B cell (primary cell): ENCODE measurements at regions of chr19 and their contacts with region 1.

Region 1: GRCh38 chr19:55407800-55408532 is 378 bp upstream of the UBE2S start:
- DNase-seq: peak; percentile 100
- ATAC-seq: peak; percentile 83
- H3K4me3 ChIP-seq: peak overlapping the region; percentile 55 to 89 (median 77)
- H3K4me3 Mint-ChIP-seq: peak overlapping the region; percentile 98
- H3K27ac ChIP-seq: peak overlapping the region; percentile 99 to 100
- H3K27ac Mint-ChIP-seq: peak overlapping the region; percentile 99
- H3K4me1 ChIP-seq: peaks cover 11 to 25% of the 10 kb centered on the region in 2 donors
- H3K4me1 Mint-ChIP-seq: peaks cover 32% of the 10 kb centered on the region
- H3K27me3 ChIP-seq: no peaks in the 10 kb centered on the region
- H3K27me3 Mint-ChIP-seq: no peaks in the 10 kb centered on the region
- CTCF ChIP-seq: no peak

Region 2: GRCh38 chr19:55279770-55280643 is 128.0 kb before region 1 on chr19 and contains the start of gene HSPBP1:
- CTCF ChIA-PET with region 1: no interaction called
- POLR2A ChIA-PET with region 1: interaction called, 4 read pairs
- intact Hi-C with region 1: loop called (anchors 1 kb)
- DNase-seq: peak; percentile 99
- ATAC-seq: peak; percentile 85
- H3K4me3 ChIP-seq: peak within 1 kb of the TSS; percentile 63 to 83 (median 71)
- H3K4me3 Mint-ChIP-seq: peak within 1 kb of the TSS; percentile 99
- H3K27ac ChIP-seq: peak within 1 kb of the TSS; percentile 87 to 96
- H3K27ac Mint-ChIP-seq: peak within 1 kb of the TSS; percentile 99
- H3K4me1 ChIP-seq: peaks cover 56 to 71% of the 10 kb centered on the region in 2 donors
- H3K4me1 Mint-ChIP-seq: peaks cover 68% of the 10 kb centered on the region
- H3K27me3 ChIP-seq: peaks cover 0 to 9% (median 3%) of the 10 kb centered on the region in 4 experiments
- H3K27me3 Mint-ChIP-seq: peaks cover 7% of the 10 kb centered on the region
- CTCF ChIP-seq: no peak
- total RNA-seq, gene HSPBP1: 15.6 and 18.2 TPM in 2 replicates

Region 3: GRCh38 chr19:55385740-55386529 is 22.0 kb before region 1 on chr19 and contains the start of gene RPL28:
- CTCF ChIA-PET with region 1: interaction called, 4 read pairs
- POLR2A ChIA-PET with region 1: interaction called, 8 read pairs
- intact Hi-C with region 1: loop called (anchors 1 kb)
- DNase-seq: peak; percentile 99
- ATAC-seq: peak; percentile 81
- H3K4me3 ChIP-seq: peak within 1 kb of the TSS; percentile 85 to 99 (median 97)
- H3K4me3 Mint-ChIP-seq: peak within 1 kb of the TSS; percentile 100
- H3K27ac ChIP-seq: peak within 1 kb of the TSS; percentile 96
- H3K27ac Mint-ChIP-seq: peak within 1 kb of the TSS; percentile 100
- H3K4me1 ChIP-seq: peaks cover 40 to 57% of the 10 kb centered on the region in 2 donors
- H3K4me1 Mint-ChIP-seq: peaks cover 68% of the 10 kb centered on the region
- H3K27me3 ChIP-seq: no peaks in the 10 kb centered on the region
- H3K27me3 Mint-ChIP-seq: no peaks in the 10 kb centered on the region
- CTCF ChIP-seq: no peak
- total RNA-seq, gene RPL28: 2,397 and 2,578 TPM in 2 replicates

Region 4: GRCh38 chr19:55392820-55393761 is 14.9 kb before region 1 on chr19:
- CTCF ChIA-PET with region 1: interaction called, 4 read pairs
- POLR2A ChIA-PET with region 1: interaction called, 21 read pairs
- intact Hi-C with region 1: no loop called
- DNase-seq: no peak
- ATAC-seq: no peak
- H3K4me3 ChIP-seq: no peak overlapping the region
- H3K4me3 Mint-ChIP-seq: no peak overlapping the region
- H3K27ac ChIP-seq: no peak overlapping the region
- H3K27ac Mint-ChIP-seq: no peak overlapping the region
- H3K4me1 ChIP-seq: peaks cover 9 to 15% of the 10 kb centered on the region in 2 donors
- H3K4me1 Mint-ChIP-seq: peaks cover 24% of the 10 kb centered on the region
- H3K27me3 ChIP-seq: no peaks in the 10 kb centered on the region
- H3K27me3 Mint-ChIP-seq: no peaks in the 10 kb centered on the region
- CTCF ChIP-seq: no peak

Region 5: DNA sequence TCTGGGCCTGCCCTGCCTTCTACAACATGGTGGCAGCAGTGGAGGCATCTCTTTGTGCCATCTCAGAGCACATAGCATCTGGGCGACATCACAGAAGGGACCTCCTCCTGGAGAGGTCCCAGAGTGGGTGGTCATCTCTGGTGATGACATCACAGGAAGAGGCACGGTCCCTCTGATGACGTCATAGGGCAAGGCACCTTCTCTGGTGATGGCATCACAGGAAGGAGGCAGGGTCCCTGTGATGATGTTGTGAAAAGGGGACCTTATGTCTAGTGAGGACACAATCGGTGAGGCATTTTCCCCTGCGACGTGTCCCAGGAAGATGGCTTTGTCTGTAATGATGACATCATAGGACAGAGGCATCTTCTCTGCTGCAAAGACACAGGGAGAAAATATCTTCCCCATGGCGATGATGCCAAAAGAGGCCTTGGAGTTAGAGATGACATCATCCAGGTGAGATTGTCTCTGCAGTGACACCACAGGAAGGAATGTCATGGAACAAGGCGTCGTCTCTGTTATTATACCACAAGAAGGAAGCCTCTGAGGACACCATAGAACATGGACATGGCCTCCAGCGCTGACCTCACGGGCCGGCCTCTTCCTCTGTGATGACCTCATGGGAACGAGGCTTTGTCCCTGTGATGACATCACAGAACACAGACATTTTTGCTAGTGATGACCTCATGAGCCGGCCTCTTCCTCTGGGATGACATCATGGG is 24.4 kb after region 1 on chr19:
- CTCF ChIA-PET with region 1: no interaction called
- POLR2A ChIA-PET with region 1: no interaction called
- intact Hi-C with region 1: no loop called
- DNase-seq: no peak
- ATAC-seq: no peak
- H3K4me3 ChIP-seq: no peak overlapping the region
- H3K4me3 Mint-ChIP-seq: no peak overlapping the region
- H3K27ac ChIP-seq: no peak overlapping the region
- H3K27ac Mint-ChIP-seq: no peak overlapping the region
- H3K4me1 ChIP-seq: no peaks in the 10 kb centered on the region
- H3K4me1 Mint-ChIP-seq: no peaks in the 10 kb centered on the region
- H3K27me3 ChIP-seq: peaks cover 0 to 73% (median 31%) of the 10 kb centered on the region in 4 experiments
- H3K27me3 Mint-ChIP-seq: peaks cover 49% of the 10 kb centered on the region
- CTCF ChIP-seq: no peak

Region 6: DNA sequence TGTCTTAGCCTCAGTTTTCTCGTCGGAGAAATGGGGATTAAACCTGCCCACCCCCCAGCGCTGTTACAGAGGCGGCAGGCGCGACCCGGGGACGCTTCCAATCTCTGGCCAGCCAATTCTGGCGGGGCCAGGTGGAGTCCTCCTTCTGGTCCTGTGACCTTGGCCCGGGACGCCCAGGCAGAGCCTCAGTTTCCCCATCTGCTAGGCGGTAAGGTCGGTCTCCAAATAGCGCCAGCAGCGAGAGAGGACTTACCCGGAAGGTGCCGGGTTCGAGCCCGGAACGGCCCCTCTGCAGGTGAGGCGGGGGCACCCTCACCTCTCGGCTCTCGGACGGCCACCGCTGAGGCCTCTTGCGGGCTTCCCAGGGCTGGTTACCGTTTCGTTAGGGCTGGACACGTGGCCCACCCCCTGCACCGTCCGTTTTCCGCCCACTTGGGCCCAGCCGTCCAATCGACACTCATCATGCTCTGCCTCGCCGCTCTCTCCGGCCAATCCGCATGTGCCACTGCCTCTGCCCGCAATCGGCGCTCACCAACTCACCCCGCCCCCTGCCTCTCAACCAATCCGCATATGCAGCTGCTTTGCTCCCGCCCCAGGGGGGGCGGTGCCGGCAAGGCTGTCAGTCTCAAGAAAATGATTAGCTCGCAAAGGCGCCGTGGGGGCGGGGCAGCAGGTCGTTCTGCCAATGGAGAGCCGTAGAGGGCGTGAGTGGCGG is 53.5 kb after region 1 on chr19 and contains the start of gene ISOC2:
- CTCF ChIA-PET with region 1: no interaction called
- POLR2A ChIA-PET with region 1: interaction called, 3 read pairs
- intact Hi-C with region 1: loop called (anchors 5 kb)
- DNase-seq: peak; percentile 100
- ATAC-seq: peak; percentile 97
- H3K4me3 ChIP-seq: peak within 1 kb of the TSS; percentile 56 to 98 (median 90)
- H3K4me3 Mint-ChIP-seq: peak within 1 kb of the TSS; percentile 87
- H3K27ac ChIP-seq: peak within 1 kb of the TSS; percentile 73 to 78
- H3K27ac Mint-ChIP-seq: peak within 1 kb of the TSS; percentile 81
- H3K4me1 ChIP-seq: peaks cover 10 to 14% of the 10 kb centered on the region in 2 donors
- H3K4me1 Mint-ChIP-seq: peaks cover 20% of the 10 kb centered on the region
- H3K27me3 ChIP-seq: no peaks in the 10 kb centered on the region
- H3K27me3 Mint-ChIP-seq: no peaks in the 10 kb centered on the region
- CTCF ChIP-seq: no peak
- total RNA-seq, gene ISOC2: 10.0 and 11.1 TPM in 2 replicates

Region 7: DNA sequence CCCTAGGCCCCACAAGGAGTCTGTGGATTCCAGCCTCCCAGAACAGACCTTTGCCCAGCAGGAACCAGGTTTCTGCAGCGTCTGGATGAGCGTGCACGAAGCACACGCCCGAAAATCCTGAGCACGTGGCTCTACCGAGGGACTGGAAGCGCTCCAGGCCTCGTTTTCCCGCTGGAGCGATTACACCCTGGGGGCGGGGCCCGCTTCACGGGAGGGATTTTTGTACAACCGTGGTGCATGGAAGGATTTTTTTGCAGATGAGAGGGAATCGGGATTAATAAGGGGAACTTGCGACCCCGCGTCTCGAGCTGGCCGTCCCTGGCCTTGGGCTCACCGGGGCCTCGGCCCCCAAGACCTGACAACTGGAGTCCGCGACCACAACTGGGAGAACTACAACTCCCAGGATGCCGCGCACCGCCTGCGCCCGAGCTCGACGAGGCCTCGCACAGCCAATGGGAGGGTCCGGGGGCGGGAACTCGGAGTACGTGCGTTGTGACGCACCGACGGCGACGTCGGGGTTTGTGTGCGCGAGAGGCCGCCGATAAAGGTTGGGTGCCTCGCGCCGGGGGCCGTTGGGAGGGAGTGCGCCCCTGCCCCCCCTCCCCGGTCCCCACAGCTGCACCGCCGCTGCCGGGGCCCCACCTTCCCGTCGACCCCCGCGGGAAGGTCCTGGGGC is 68.3 kb after region 1 on chr19 and contains the start of gene ZNF628:
- CTCF ChIA-PET with region 1: no interaction called
- POLR2A ChIA-PET with region 1: interaction called, 9 read pairs
- intact Hi-C with region 1: loop called (anchors 2 kb)
- DNase-seq: peak; percentile 99
- ATAC-seq: peak; percentile 90
- H3K4me3 ChIP-seq: peak within 1 kb of the TSS; percentile 63 to 97 (median 77)
- H3K4me3 Mint-ChIP-seq: peak within 1 kb of the TSS; percentile 95
- H3K27ac ChIP-seq: peak within 1 kb of the TSS; percentile 69 to 92
- H3K27ac Mint-ChIP-seq: peak within 1 kb of the TSS; percentile 97
- H3K4me1 ChIP-seq: peaks cover 15 to 21% of the 10 kb centered on the region in 2 donors
- H3K4me1 Mint-ChIP-seq: peaks cover 34% of the 10 kb centered on the region
- H3K27me3 ChIP-seq: no peaks in the 10 kb centered on the region
- H3K27me3 Mint-ChIP-seq: no peaks in the 10 kb centered on the region
- CTCF ChIP-seq: no peak
- total RNA-seq, gene ZNF628: 13.3 and 15.5 TPM in 2 replicates

Region 8: GRCh38 chr19:55487632-55488152 is 79.7 kb after region 1 on chr19:
- CTCF ChIA-PET with region 1: no interaction called
- POLR2A ChIA-PET with region 1: no interaction called
- intact Hi-C with region 1: no loop called
- DNase-seq: no peak
- ATAC-seq: no peak
- H3K4me3 ChIP-seq: no peak overlapping the region
- H3K4me3 Mint-ChIP-seq: peak overlapping the region; percentile 32
- H3K27ac ChIP-seq: no peak overlapping the region
- H3K27ac Mint-ChIP-seq: no peak overlapping the region
- H3K4me1 ChIP-seq: peaks cover 10 to 22% of the 10 kb centered on the region in 2 donors
- H3K4me1 Mint-ChIP-seq: peaks cover 11% of the 10 kb centered on the region
- H3K27me3 ChIP-seq: peaks cover 0 to 23% (median 0%) of the 10 kb centered on the region in 4 experiments
- H3K27me3 Mint-ChIP-seq: peaks cover 8% of the 10 kb centered on the region
- CTCF ChIP-seq: no peak

Region 9: DNA sequence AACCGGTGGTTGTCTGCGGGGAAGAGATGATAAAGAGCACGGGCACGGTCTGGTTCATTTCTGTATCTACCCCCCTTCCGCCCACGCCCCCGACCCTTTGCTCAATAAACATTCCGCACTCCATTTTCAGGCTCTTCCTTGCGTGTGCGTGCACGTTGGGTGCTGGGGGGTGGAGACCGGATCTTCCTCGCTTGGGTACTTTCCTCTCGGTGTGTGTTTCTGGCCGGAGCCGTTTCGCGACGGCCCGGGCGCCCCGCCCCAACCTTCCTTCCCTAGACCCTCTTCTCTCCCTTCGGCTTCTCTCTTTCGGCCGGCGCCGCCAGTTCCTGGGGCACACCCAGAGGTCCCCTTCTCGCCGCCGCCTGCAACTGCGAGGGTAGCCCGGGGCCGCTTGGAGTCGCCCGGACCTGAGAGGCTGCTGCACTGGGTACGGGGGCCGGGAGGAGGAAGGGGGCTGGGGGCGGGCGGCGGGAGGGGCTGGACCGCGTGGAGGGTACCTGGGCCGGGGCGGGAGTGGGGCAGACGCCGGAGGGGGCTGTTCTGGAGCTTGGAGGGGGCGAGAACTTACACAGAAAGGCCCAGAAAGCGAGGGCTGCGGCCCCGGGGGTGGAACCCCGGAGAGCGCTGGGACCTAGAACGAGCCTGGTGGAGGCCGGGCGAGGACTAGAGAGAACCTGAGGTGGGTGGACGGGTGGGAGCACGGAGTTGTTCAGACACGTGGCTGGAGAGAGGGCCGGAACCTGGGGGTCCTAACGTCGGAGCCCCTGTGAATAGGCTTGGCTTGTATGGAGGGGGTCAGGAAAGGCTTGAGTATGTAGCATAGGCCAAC is 235.6 kb after region 1 on chr19 and contains the start of gene ZNF581:
- CTCF ChIA-PET with region 1: no interaction called
- POLR2A ChIA-PET with region 1: no interaction called
- intact Hi-C with region 1: loop called (anchors 5 kb)
- DNase-seq: peak; percentile 90
- ATAC-seq: peak; percentile 36
- H3K4me3 ChIP-seq: peak within 1 kb of the TSS; percentile 59 to 85 (median 78)
- H3K4me3 Mint-ChIP-seq: peak within 1 kb of the TSS; percentile 88
- H3K27ac ChIP-seq: peak within 1 kb of the TSS; percentile 79 to 82
- H3K27ac Mint-ChIP-seq: peak within 1 kb of the TSS; percentile 98
- H3K4me1 ChIP-seq: peaks cover 32 to 68% of the 10 kb centered on the region in 2 donors
- H3K4me1 Mint-ChIP-seq: peaks cover 60% of the 10 kb centered on the region
- H3K27me3 ChIP-seq: no peaks in the 10 kb centered on the region
- H3K27me3 Mint-ChIP-seq: no peaks in the 10 kb centered on the region
- CTCF ChIP-seq: no peak
- total RNA-seq, gene ZNF581: 47.3 and 51.3 TPM in 2 replicates